Activated CD4-positive, alpha-beta T cell treated with anti-CD3 and anti-CD28 coated beads, Interleukin-2, amount 10 ng/mL, durations not matched to agents 24 days and 14 days (primary cell): ENCODE measurements at regions of chr13 and their contacts with region 1.

Region 1: GRCh38 chr13:97432917-97433726 is 847 bp upstream of the RAP2A start:
- DNase-seq: peak; percentile 100
- H3K4me3 Mint-ChIP-seq: peak overlapping the region; percentile 94
- H3K27ac Mint-ChIP-seq: peak overlapping the region; percentile 98
- H3K4me1 Mint-ChIP-seq: peaks cover 32% of the 10 kb centered on the region
- H3K27me3 Mint-ChIP-seq: peaks cover 12% of the 10 kb centered on the region

Region 2: GRCh38 chr13:97289514-97290298 is 143.4 kb before region 1 on chr13:
- intact Hi-C with region 1: loop called (anchors 2 kb)
- DNase-seq: no peak
- H3K4me3 Mint-ChIP-seq: no peak overlapping the region
- H3K27ac Mint-ChIP-seq: no peak overlapping the region
- H3K4me1 Mint-ChIP-seq: peaks cover 25% of the 10 kb centered on the region
- H3K27me3 Mint-ChIP-seq: no peaks in the 10 kb centered on the region

Region 3: GRCh38 chr13:97460853-97461252 is 27.7 kb after region 1 on chr13:
- intact Hi-C with region 1: loop called (anchors 1 kb)
- DNase-seq: no peak
- H3K4me3 Mint-ChIP-seq: peak overlapping the region; percentile 26
- H3K27ac Mint-ChIP-seq: peak overlapping the region; percentile 39
- H3K4me1 Mint-ChIP-seq: peaks cover 25% of the 10 kb centered on the region
- H3K27me3 Mint-ChIP-seq: no peaks in the 10 kb centered on the region